Right lobe of liver (tissue), 6 donors: ENCODE measurements at regions of chr6 and their contacts with region 1.

Region 1: GRCh38 chr6:122033539-122034181 is 365.8 kb upstream of the HSF2 start:
- DNase-seq: no peak
- ATAC-seq: peak; percentile 93 to 97 (median 94)
- H3K4me3 ChIP-seq: no peak overlapping the region
- H3K27ac ChIP-seq: no peak overlapping the region
- H3K4me1 ChIP-seq: no peaks in the 10 kb centered on the region
- H3K27me3 ChIP-seq: no peaks in the 10 kb centered on the region
- CTCF ChIP-seq: peak; percentile 64 to 69 (median 66)
- POLR2A ChIP-seq: no peak

Region 2: GRCh38 chr6:121430514-121431460 is 602.9 kb before region 1 on chr6:
- intact Hi-C with region 1: loop called (anchors 10 kb)
- DNase-seq: no peak
- ATAC-seq: peak; percentile 87 to 95 (median 90)
- H3K4me3 ChIP-seq: peak overlapping the region in 1 of 3 donors; percentile 12
- H3K27ac ChIP-seq: no peak overlapping the region
- H3K4me1 ChIP-seq: no peaks in the 10 kb centered on the region
- H3K27me3 ChIP-seq: no peaks in the 10 kb centered on the region
- CTCF ChIP-seq: peak; percentile 61 to 71 (median 66)
- POLR2A ChIP-seq: no peak

Region 3: DNA sequence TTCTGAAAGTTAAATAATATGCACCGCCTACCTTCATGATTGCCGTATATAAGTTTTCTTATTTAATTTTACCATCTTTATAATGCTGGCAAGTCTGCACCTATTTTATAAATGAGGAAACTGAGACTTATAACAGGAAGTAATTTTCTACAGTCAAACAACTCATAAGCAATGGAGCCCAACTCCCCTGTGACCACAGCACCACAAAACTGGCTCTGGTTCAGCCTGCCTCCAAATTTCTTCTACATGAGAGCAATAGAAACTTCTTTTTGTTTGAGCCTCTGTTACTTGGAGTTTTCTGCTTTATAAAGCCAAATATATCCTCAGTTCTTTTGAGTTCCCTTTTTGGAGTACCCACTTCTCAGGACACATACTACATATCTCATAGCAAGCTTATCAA is 234.7 kb after region 1 on chr6:
- intact Hi-C with region 1: no loop called
- DNase-seq: no peak
- ATAC-seq: no peak
- H3K4me3 ChIP-seq: no peak overlapping the region
- H3K27ac ChIP-seq: no peak overlapping the region
- H3K4me1 ChIP-seq: no peaks in the 10 kb centered on the region
- H3K27me3 ChIP-seq: no peaks in the 10 kb centered on the region
- CTCF ChIP-seq: no peak
- POLR2A ChIP-seq: no peak